Gastrocnemius medialis (tissue), 4 donors: ENCODE measurements at regions of chr7 and their contacts with region 1.

Region 1: GRCh38 chr7:27204851-27205337 is 5.0 kb upstream of the HOXA13 start:
- DNase-seq: no peak
- ATAC-seq: peak in 1 of 2 donors; percentile 12
- H3K4me3 ChIP-seq: peak overlapping the region; percentile 26 to 54 (median 34)
- H3K27ac ChIP-seq: no peak overlapping the region
- H3K4me1 ChIP-seq: peaks cover 8 to 10% of the 10 kb centered on the region in 2 donors
- H3K27me3 ChIP-seq: peaks cover 41 to 69% (median 57%) of the 10 kb centered on the region in 3 donors
- CTCF ChIP-seq: no peak
- POLR2A ChIP-seq: no peak

Region 2: GRCh38 chr7:28013019-28013418 is 808.1 kb after region 1 on chr7:
- in situ Hi-C with region 1: loop called in 2 of 4 experiments (anchors 5 to 10 kb)
- intact Hi-C with region 1: no loop called
- DNase-seq: no peak
- ATAC-seq: no peak
- H3K4me3 ChIP-seq: no peak overlapping the region
- H3K27ac ChIP-seq: no peak overlapping the region
- H3K4me1 ChIP-seq: peaks cover 13 to 28% of the 10 kb centered on the region in 2 donors
- H3K27me3 ChIP-seq: no peaks in the 10 kb centered on the region
- CTCF ChIP-seq: no peak
- POLR2A ChIP-seq: no peak